ENCODE measurements at regions of chr20 and their contacts with region 1.

Region 1: GRCh38 chr20:41395667-41396664 is 29.3 kb upstream of the EMILIN3 start:
- DNase-seq: no peak
- H3K4me3 ChIP-seq: no peak overlapping the region
- H3K27ac ChIP-seq: no peak overlapping the region
- H3K4me1 ChIP-seq: no peaks in the 10 kb centered on the region
- H3K27me3 ChIP-seq: no peaks in the 10 kb centered on the region
- CTCF ChIP-seq: no peak

Region 2: GRCh38 chr20:41352108-41352507 is 43.9 kb before region 1 on chr20:
- intact Hi-C with region 1: loop called (anchors 5 kb)
- DNase-seq: no peak
- H3K4me3 ChIP-seq: no peak overlapping the region
- H3K27ac ChIP-seq: no peak overlapping the region
- H3K4me1 ChIP-seq: no peaks in the 10 kb centered on the region
- H3K27me3 ChIP-seq: no peaks in the 10 kb centered on the region
- CTCF ChIP-seq: no peak

Measured in ascending aorta (tissue), 2 donors.